Activated CD4-positive, alpha-beta memory T cell treated with anti-CD3 and anti-CD28 coated beads for 36 hours (primary cell): ENCODE measurements at regions of chr14 and their contacts with region 1.

Region 1: DNA sequence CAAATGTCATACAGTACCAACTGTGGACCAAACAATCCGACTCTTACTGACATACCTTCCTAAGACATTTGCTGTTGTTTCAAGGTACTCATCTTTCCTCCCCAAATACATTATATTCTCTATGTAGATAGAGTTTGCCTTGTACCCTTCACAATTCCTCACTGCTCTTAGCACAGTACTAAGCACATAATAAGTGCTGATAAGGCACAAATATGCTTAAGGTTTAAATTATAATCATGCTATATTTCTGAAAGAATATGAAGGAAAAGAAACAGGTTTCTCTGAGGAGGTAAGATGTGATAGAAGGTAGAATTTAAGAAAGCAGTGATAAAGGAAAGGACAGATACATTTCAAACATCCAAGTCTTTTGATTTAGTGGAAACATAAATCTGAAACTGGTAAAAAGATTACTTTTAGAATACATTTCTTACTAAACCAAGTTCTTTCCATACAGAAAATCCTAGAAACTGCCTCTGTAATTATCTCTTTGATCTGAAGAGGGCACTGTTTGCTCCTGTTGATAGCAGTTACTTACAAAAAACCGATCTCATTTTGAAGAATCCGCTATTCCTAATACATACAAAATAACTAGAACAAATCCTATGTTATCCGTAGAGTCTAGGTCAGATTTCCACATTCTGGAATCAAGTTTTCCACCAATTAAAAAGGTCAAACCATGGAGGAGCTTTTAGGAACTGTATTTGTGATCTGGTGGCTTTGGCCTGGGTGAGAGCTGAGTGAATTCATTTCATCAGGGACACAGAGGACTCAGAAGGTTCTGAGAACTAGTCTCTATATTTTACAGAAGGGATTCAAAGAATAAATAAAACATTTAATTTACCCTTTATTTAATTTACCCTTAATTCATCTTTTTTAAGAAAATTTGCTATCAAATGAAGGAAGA is 311.9 kb downstream of the DAD1 start:
- DNase-seq: no peak
- H3K4me3 Mint-ChIP-seq: no peak overlapping the region
- H3K27ac Mint-ChIP-seq: no peak overlapping the region
- H3K4me1 Mint-ChIP-seq: no peaks in the 10 kb centered on the region
- H3K27me3 Mint-ChIP-seq: no peaks in the 10 kb centered on the region

Region 2: GRCh38 chr14:22010545-22011252 is 266.5 kb before region 1 on chr14:
- CTCF ChIA-PET with region 1: no interaction called
- POLR2A ChIA-PET with region 1: no interaction called
- intact Hi-C with region 1: no loop called
- DNase-seq: no peak
- H3K4me3 Mint-ChIP-seq: no peak overlapping the region
- H3K27ac Mint-ChIP-seq: no peak overlapping the region
- H3K4me1 Mint-ChIP-seq: peaks cover 13% of the 10 kb centered on the region
- H3K27me3 Mint-ChIP-seq: no peaks in the 10 kb centered on the region

Region 3: GRCh38 chr14:22231018-22231417 is 46.1 kb before region 1 on chr14:
- CTCF ChIA-PET with region 1: no interaction called
- POLR2A ChIA-PET with region 1: no interaction called
- intact Hi-C with region 1: loop called (anchors 2 kb)
- DNase-seq: peak; percentile 10
- H3K4me3 Mint-ChIP-seq: no peak overlapping the region
- H3K27ac Mint-ChIP-seq: peak overlapping the region; percentile 23
- H3K4me1 Mint-ChIP-seq: no peaks in the 10 kb centered on the region
- H3K27me3 Mint-ChIP-seq: no peaks in the 10 kb centered on the region